KBM-7 (cell line): ENCODE measurements at regions of chrX and their contacts with region 1.

Region 1: GRCh38 chrX:19334945-19335626 is 8.6 kb upstream of the PDHA1 start:
- DNase-seq: peak; percentile 80

Region 2: DNA sequence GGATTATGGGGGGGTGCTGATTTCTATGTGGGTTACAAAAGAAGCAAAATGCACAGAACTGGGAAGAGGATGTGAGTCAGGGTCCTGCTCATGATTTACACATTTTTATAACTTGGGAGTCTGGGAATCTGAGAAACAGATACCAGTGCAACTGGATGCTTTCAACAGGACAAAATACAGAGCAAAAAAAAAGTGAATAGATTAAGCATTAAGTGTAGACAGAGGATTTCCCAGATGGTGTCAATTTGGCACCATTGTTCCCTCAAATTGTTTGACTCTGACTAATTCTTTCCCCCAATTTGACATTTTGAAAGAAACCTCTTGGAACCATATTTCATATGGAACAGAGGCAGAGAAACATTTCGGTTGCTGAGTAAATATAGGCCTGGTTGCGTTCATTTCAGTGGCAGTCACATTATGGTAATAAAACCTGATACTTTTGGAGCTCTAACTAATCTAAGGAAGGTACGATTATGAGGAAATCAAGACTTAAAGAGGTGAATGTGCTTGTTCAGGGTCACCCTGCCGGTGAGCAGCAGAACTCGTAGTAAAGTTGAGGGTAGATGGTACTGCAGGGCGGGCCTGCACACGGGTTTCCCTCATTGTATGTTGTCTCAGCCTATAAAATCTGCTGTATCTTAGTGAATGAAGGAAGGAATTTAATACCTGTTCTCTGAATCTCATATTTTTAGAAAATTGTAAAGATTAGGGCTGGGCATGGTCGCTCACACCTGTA is 928.4 kb before region 1 on chrX:
- in situ Hi-C with region 1: loop called (anchors 10 kb)
- DNase-seq: no peak

Region 3: DNA sequence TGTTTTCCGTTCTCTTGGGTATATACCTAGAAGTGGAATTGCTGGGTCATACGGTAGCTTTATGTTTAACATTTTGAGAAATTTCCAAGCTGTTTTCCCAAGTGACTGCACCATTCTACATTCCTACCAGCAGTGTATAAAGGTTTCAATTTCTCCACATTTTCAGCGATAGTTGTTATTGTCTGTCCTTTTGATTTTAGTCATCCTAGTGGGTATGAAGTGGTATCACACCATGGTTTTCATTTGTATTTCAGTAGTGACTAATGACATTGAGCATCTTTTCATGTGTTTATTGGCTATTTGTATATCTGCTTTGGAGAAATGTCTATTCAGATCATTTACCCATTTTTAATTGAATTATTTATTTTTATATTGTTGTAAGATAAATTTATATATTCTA is 625.2 kb before region 1 on chrX:
- in situ Hi-C with region 1: no loop called
- DNase-seq: no peak